Activated CD4-positive, alpha-beta T cell treated with anti-CD3 and anti-CD28 coated beads for 36 hours (primary cell): ENCODE measurements at regions of chr12 and their contacts with region 1.

Region 1: DNA sequence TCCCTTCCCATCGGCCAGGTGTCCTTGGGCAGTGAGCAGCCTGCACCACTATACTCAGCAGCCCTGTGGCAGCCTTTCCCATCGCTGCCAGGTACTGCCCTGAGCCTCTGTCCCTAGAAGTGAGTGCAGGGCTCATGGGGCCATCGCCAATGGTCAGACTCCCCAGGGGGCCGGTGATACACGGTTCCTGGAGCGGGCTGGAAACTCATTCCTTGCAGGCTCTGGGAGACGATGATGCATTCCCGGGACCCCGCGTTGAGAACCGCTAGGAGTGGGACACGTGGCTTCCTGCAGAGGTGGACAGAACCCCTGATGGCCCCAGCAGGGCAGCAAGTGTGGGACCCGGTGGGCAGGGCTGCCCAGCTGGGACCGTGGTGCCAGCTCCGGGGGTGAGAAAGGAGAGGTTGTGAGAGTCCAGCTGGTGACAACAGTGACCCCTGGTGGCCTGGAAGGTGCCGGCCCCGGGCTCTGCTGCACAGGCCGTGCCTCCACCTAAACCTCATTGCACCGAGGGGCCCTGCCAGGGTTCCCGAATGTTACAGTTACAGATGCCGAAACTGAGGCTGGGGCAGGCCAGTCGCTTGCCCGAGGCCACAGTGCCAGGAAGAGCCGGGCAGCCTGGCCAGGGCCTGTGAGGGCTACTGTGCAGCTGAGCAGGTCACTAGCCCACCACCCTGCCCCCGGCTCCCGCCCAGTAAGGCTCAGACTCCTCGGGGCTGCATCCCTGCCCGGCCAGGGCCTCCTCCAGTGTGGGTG is 33.8 kb downstream of the FBRSL1 start:
- DNase-seq: peak; percentile 86
- ATAC-seq: peak; percentile 86
- H3K4me3 Mint-ChIP-seq: no peak overlapping the region
- H3K27ac Mint-ChIP-seq: no peak overlapping the region
- H3K4me1 Mint-ChIP-seq: peaks cover 4% of the 10 kb centered on the region
- H3K27me3 Mint-ChIP-seq: no peaks in the 10 kb centered on the region

Region 2: GRCh38 chr12:131971226-131971625 is 552.5 kb before region 1 on chr12:
- CTCF ChIA-PET with region 1: no interaction called
- POLR2A ChIA-PET with region 1: no interaction called
- intact Hi-C with region 1: no loop called
- DNase-seq: no peak
- ATAC-seq: no peak
- H3K4me3 Mint-ChIP-seq: no peak overlapping the region
- H3K27ac Mint-ChIP-seq: no peak overlapping the region
- H3K4me1 Mint-ChIP-seq: peaks cover 32% of the 10 kb centered on the region
- H3K27me3 Mint-ChIP-seq: no peaks in the 10 kb centered on the region

Region 3: DNA sequence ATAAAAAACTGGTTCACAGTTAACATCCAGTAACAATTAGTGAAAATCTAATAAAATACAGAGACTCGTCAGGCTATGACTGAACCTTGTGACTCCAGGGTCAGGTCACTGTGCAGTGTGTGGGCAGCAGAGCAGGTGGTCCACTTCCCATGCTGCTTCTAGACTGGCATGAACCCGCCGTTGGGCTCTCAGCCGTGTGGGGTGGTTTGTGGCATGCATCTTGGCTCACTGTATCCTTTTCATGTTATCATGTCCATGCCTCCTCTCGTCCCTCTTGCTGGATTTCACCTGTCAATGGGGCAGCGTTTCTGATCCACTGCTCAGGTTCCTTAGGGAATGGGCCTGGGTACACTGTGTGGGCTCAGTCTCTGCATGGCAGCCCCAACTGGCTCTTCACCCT is 516.7 kb before region 1 on chr12:
- CTCF ChIA-PET with region 1: no interaction called
- POLR2A ChIA-PET with region 1: no interaction called
- intact Hi-C with region 1: no loop called
- DNase-seq: no peak
- ATAC-seq: no peak
- H3K4me3 Mint-ChIP-seq: no peak overlapping the region
- H3K27ac Mint-ChIP-seq: no peak overlapping the region
- H3K4me1 Mint-ChIP-seq: no peaks in the 10 kb centered on the region
- H3K27me3 Mint-ChIP-seq: no peaks in the 10 kb centered on the region

Region 4: DNA sequence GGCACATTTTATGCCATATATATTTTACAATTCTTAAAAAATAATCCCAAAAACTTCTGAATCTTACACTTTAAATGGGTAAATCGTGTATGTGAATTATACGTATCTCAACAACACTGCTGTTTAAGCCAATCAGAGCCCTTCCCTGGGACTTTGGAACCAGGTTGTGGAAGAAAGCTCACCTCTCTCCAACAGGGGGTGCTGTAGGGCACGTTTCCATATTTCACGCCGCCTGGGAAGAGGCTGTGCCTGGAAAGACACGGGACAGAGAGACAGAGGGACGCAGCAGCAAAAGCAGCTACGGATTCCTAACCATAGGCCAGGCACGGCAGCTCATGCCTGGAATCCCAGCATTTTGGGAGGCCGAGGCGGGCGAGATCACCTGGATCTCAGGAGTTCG is 63.2 kb before region 1 on chr12:
- CTCF ChIA-PET with region 1: interaction called, 4 read pairs
- POLR2A ChIA-PET with region 1: no interaction called
- intact Hi-C with region 1: loop called in 1 of 2 experiments (anchors 1 kb)
- DNase-seq: peak; percentile 59
- ATAC-seq: peak; percentile 57
- H3K4me3 Mint-ChIP-seq: no peak overlapping the region
- H3K27ac Mint-ChIP-seq: no peak overlapping the region
- H3K4me1 Mint-ChIP-seq: peaks cover under 1% of the 10 kb centered on the region
- H3K27me3 Mint-ChIP-seq: no peaks in the 10 kb centered on the region